ENCODE measurements at regions of chr11 and their contacts with region 1.

Region 1: DNA sequence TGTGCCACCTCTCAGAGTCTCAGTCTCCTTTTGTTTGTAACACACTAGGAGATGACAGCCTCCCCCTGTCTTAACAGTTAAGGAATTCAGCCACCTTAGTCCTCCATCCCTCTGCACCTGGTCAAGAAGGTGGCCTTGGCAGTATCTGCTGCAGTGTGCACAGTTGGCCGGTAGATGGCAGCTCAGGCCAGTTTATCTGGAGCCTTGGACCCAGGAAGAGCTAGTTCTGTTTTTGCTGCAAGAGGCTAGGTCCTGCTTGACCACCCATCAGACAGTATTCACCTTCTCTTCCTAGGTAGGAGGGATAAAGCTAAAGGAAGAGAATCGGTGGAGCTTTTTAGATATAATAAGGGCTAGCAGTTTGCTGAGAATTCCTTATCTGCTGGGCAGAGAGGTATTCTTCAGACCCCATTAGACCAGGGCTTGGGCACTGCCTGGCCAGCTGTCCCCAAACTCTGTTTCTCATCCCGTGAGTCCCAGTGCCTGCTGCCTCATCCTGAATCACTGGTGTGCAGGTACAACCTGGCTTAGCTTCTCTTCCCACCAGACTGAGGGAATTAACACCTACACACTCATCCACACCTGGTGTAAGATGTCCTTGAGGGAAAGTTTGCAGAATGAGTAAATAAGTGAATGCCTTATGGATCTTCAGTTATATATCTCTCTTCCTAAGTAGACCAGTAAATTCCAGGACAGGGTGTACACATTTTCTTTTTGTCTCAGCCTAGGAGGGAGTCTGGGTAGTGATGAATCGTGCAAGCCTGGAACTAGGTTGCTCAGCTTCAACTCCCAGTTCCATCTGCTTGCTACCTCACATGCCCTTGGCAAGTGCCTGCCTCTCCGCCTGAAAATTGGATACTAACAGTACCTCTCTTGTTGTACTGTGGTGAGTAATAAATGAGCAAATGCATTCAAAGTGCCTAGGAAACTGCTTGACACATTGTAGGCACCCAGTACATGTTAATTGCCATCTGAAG is 70.8 kb upstream of the NARS2 start:
- DNase-seq: peak; percentile 66
- ATAC-seq: peak; percentile 87
- H3K4me3 ChIP-seq: no peak overlapping the region
- H3K27ac ChIP-seq: no peak overlapping the region
- H3K4me1 ChIP-seq: 0 out of 2 replicates have a peak, but pooled peaks cover 2% of the 10 kb centered on the region
- H3K27me3 ChIP-seq: peaks cover 11% of the 10 kb centered on the region; the same call in 1 of the 2 replicates
- CTCF ChIP-seq: peak; percentile 96

Region 2: DNA sequence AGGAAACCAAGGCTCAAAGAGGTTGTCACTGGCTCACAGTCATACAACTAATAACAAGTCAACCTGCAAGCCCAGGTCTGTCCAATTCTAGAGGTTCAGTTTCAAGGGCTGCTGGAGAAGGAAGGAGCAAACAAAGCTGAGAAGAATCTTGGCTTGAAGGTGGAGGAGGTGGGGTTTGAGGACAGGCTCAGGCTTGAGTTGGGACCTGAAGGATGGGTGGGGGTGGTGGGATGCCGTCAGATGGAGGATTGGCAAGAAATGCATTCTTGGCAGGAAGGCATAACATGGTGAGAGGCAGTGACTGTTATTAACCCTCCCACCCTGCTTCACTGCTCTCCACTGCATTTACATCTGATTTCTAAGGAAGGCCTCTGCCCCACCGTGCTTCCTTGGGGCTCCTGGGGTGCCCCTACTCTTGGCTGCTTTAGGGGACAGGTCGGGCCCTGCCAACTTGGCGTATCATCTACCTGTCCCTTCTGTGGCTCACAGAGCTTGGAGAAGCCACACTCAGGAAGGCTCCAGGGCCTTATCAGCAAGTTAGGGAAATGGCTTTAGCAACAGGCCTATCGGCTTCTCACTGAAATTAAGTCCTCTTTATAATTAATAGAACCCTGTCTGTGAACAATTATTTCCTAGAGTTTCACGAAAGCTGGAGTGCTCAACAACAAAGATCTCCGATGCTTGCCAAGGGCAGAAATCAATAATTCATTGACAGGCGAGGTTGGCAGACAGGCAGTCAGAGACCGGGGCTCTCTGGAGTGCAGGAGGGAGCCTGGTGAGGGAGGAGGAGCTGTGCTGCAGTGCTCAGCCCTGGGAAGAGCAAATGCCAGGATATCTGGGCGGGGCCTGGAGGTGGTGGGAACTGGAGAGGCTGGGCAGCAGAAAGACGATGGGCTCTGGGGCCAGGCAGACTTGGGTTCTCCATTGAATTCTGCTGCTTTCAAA is 14.1 kb after region 1 on chr11:
- CTCF ChIA-PET with region 1: no interaction called
- POLR2A ChIA-PET with region 1: no interaction called
- in situ Hi-C with region 1: no loop called
- intact Hi-C with region 1: no loop called
- DNase-seq: no peak
- ATAC-seq: no peak
- H3K4me3 ChIP-seq: no peak overlapping the region
- H3K27ac ChIP-seq: no peak overlapping the region
- H3K4me1 ChIP-seq: no peaks in the 10 kb centered on the region
- H3K27me3 ChIP-seq: no peaks in the 10 kb centered on the region
- CTCF ChIP-seq: no peak

Region 3: GRCh38 chr11:78715639-78716311 is 70.3 kb after region 1 on chr11:
- CTCF ChIA-PET with region 1: interaction called, 12 read pairs
- POLR2A ChIA-PET with region 1: no interaction called
- in situ Hi-C with region 1: no loop called
- intact Hi-C with region 1: loop called (anchors 2 kb)
- DNase-seq: peak; percentile 78
- ATAC-seq: peak; percentile 83
- H3K4me3 ChIP-seq: no peak overlapping the region
- H3K27ac ChIP-seq: no peak overlapping the region
- H3K4me1 ChIP-seq: peaks cover 3% of the 10 kb centered on the region; the same call in 1 of the 2 replicates
- H3K27me3 ChIP-seq: no peaks in the 10 kb centered on the region
- CTCF ChIP-seq: peak; percentile 83

Region 4: GRCh38 chr11:78860720-78861422 is 215.4 kb after region 1 on chr11:
- CTCF ChIA-PET with region 1: interaction called, 10 read pairs
- POLR2A ChIA-PET with region 1: no interaction called
- in situ Hi-C with region 1: no loop called
- intact Hi-C with region 1: no loop called
- DNase-seq: no peak
- ATAC-seq: no peak
- H3K4me3 ChIP-seq: no peak overlapping the region
- H3K27ac ChIP-seq: no peak overlapping the region
- H3K4me1 ChIP-seq: no peaks in the 10 kb centered on the region
- H3K27me3 ChIP-seq: peaks cover 3% of the 10 kb centered on the region; the same call in 1 of the 2 replicates
- CTCF ChIP-seq: no peak

Region 5: GRCh38 chr11:79076526-79077115 is 431.1 kb after region 1 on chr11:
- CTCF ChIA-PET with region 1: no interaction called
- POLR2A ChIA-PET with region 1: interaction called, 8 read pairs
- in situ Hi-C with region 1: no loop called
- intact Hi-C with region 1: loop called (anchors 5 kb)
- DNase-seq: no peak
- ATAC-seq: peak; percentile 85; the same call in 1 of the 2 replicates
- H3K4me3 ChIP-seq: no peak overlapping the region
- H3K27ac ChIP-seq: no peak overlapping the region
- H3K4me1 ChIP-seq: no peaks in the 10 kb centered on the region
- H3K27me3 ChIP-seq: no peaks in the 10 kb centered on the region
- CTCF ChIP-seq: peak; percentile 83

Region 6: GRCh38 chr11:79493555-79494171 is 848.1 kb after region 1 on chr11:
- CTCF ChIA-PET with region 1: no interaction called
- POLR2A ChIA-PET with region 1: no interaction called
- in situ Hi-C with region 1: no loop called
- intact Hi-C with region 1: loop called (anchors 5 kb)
- DNase-seq: peak; percentile 48
- ATAC-seq: peak; percentile 95
- H3K4me3 ChIP-seq: no peak overlapping the region
- H3K27ac ChIP-seq: no peak overlapping the region
- H3K4me1 ChIP-seq: no peaks in the 10 kb centered on the region
- H3K27me3 ChIP-seq: peaks cover 3% of the 10 kb centered on the region; the same call in 1 of the 2 replicates
- CTCF ChIP-seq: peak; percentile 98